ENCODE measurements at regions of chr12 and their contacts with region 1.

Region 1: DNA sequence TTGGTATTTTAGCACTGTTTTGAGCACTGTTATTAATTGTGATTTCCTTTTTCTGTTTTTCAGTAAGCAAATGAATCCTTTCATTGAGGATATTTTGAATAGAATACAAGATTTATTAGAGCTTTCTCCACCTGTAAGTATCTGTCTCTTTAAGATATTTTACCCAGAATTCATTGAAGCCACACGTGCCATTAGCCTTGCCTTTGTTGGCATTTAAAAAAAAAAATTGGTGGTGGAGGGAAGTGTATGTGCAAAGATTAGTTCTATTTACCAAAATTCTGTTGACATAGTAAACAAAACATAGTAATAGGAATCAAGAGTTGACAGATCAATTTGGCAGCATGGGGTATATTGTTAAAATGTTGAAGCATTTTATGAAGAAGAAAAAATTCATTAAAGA is 23.8 kb downstream of the XPOT start:
- H3K4me3 Mint-ChIP-seq: no peak overlapping the region
- H3K27ac Mint-ChIP-seq: no peak overlapping the region
- H3K4me1 Mint-ChIP-seq: no peaks in the 10 kb centered on the region
- H3K27me3 Mint-ChIP-seq: no peaks in the 10 kb centered on the region

Region 2: GRCh38 chr12:64373193-64373592 is 54.8 kb before region 1 on chr12:
- intact Hi-C with region 1: no loop called
- H3K4me3 Mint-ChIP-seq: no peak overlapping the region
- H3K27ac Mint-ChIP-seq: no peak overlapping the region
- H3K4me1 Mint-ChIP-seq: no peaks in the 10 kb centered on the region
- H3K27me3 Mint-ChIP-seq: no peaks in the 10 kb centered on the region

Region 3: GRCh38 chr12:64470495-64470894 is 42.5 kb after region 1 on chr12:
- intact Hi-C with region 1: no loop called
- H3K4me3 Mint-ChIP-seq: no peak overlapping the region
- H3K27ac Mint-ChIP-seq: no peak overlapping the region
- H3K4me1 Mint-ChIP-seq: no peaks in the 10 kb centered on the region
- H3K27me3 Mint-ChIP-seq: no peaks in the 10 kb centered on the region

Region 4: GRCh38 chr12:64486657-64487056 is 58.7 kb after region 1 on chr12:
- intact Hi-C with region 1: loop called (anchors 5 kb)
- H3K4me3 Mint-ChIP-seq: no peak overlapping the region
- H3K27ac Mint-ChIP-seq: no peak overlapping the region
- H3K4me1 Mint-ChIP-seq: no peaks in the 10 kb centered on the region
- H3K27me3 Mint-ChIP-seq: no peaks in the 10 kb centered on the region